Common myeloid progenitor, CD34-positive (primary cell): ENCODE measurements at regions of chr12 and their contacts with region 1.

Region 1: GRCh38 chr12:2583091-2583497 is 211.7 kb upstream of the FKBP4 start:
- DNase-seq: peak; percentile 56 to 73 (median 71)
- H3K4me3 ChIP-seq: peak overlapping the region in 4 of 7 experiments; percentile 23 to 54 (median 38)
- H3K27ac ChIP-seq: no peak overlapping the region
- H3K4me1 ChIP-seq: peaks cover 0 to 17% (median 10%) of the 10 kb centered on the region in 4 experiments
- H3K27me3 ChIP-seq: no peaks in the 10 kb centered on the region

Region 2: DNA sequence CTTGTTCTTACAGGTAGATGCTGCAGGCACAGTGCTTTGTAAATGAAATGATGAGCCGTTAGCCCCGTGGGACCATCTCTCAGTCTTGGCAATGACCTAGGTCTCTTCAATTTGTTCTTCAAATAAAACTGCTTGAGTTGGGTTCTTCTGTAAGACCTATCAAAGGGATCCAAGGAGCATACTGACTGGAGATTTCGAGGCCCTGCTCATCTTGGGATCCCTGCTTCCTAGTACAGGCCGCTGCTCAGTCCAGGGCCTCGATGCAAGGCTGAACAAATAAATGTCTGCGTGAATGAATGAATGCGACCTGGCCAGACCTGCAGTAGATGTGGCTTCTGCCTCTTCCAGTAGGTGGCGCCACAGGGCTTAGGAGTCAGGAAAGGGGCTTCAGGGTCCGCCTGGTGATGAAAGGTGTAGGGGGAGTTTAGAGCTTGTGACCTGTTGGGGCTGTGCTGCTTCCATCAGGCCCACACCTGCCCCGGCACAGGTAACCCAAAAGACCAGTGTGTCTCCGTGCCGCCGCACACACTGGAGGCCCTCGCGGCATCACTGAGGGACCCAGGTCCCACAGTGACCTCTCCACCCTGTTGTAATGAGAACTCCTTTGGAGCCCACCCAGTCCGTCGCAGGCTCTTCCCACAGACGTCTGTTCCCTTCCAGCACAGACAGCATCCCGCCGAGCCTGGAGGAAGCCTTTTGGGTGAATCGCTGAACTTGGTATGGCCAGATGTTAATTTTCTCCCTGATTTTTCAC is 525.9 kb before region 1 on chr12:
- CTCF ChIA-PET with region 1: interaction called, 33 read pairs
- POLR2A ChIA-PET with region 1: no interaction called
- DNase-seq: peak; percentile 81 to 90 (median 86)
- H3K4me3 ChIP-seq: no peak overlapping the region
- H3K27ac ChIP-seq: no peak overlapping the region
- H3K4me1 ChIP-seq: peaks cover 0 to 16% (median 14%) of the 10 kb centered on the region in 4 experiments
- H3K27me3 ChIP-seq: peaks cover 13 to 35% (median 23%) of the 10 kb centered on the region in 5 experiments

Region 3: DNA sequence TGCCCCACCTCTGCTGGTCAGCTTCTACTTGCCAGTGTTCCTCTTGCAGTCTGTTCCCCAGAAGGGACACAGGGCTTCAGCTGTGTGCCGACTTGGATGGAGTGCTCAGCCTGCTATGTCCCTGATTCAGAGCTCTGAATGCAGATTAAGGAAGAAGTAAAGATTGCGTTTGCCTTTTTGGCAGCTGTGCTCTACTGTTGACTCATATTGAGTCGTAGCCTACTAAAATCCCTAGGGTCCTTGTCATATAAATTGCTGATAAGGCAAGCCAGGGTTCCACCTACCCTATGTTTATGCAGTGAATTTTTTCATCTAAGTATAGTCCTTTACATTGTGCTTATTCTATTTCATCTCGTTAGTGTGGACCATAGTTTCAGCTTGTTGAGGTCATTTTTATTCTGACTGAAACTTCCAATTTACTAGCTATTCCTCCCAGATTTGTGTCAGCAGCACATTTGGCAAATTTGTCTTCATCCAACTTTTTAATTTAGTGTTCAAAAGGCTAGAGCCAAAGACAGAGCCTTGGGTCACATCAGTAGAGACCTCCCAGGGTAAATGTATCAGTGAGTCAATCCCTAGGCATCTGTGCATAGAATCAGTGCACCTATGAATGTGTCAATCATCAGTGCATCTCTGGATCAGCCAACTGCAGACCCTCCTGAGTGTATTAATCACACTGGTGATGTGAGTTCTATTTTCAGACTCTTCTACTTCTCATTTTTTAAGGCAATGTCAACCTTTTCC is 498.4 kb before region 1 on chr12:
- CTCF ChIA-PET with region 1: no interaction called
- POLR2A ChIA-PET with region 1: no interaction called
- DNase-seq: no peak
- H3K4me3 ChIP-seq: no peak overlapping the region
- H3K27ac ChIP-seq: no peak overlapping the region
- H3K4me1 ChIP-seq: no peaks in the 10 kb centered on the region
- H3K27me3 ChIP-seq: no peaks in the 10 kb centered on the region

Region 4: GRCh38 chr12:2360629-2361168 is 222.4 kb before region 1 on chr12:
- CTCF ChIA-PET with region 1: interaction called, 20 read pairs
- POLR2A ChIA-PET with region 1: interaction called, 3 read pairs
- DNase-seq: no peak
- H3K4me3 ChIP-seq: no peak overlapping the region
- H3K27ac ChIP-seq: no peak overlapping the region
- H3K4me1 ChIP-seq: peaks cover 22 to 98% (median 70%) of the 10 kb centered on the region in 4 experiments
- H3K27me3 ChIP-seq: no peaks in the 10 kb centered on the region

Region 5: DNA sequence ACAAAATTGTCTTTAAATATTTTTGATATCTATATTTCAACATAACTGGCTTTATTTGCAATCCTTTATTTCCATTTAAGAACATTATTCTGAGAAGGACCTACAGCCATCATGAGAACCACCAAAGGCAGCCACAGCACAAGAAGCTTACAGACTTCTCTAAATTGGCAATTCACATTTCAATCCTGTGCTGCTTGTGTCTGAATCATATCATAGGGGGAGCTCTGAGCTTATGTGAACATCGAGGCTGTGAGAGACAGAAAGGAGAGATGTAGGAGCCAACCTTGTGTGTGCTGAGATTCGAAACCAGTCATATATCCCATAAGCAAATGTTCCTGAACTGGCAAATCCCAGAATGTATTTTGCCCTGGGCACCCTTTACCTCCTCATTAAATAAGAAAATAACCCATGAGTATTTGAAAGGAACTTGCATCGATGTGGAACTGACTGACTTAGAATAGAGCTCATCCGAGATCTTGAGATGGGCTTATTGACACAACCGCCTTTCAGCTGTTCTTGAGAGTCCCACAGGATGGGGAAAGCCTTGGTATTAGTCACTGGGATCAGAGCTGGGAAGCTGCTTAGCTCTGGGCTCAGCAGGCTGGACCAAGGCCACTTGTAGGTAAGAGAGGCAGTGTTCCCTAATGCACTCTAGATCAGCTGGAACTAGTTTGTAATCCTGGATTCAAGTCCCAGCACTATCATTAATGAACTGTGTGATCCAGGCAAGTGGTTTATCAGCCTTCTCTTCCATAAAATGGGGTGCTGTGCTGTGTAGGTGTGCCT is 200.5 kb before region 1 on chr12:
- CTCF ChIA-PET with region 1: interaction called, 16 read pairs
- POLR2A ChIA-PET with region 1: no interaction called
- DNase-seq: peak in 2 of 3 donors; percentile 55 to 56
- H3K4me3 ChIP-seq: no peak overlapping the region
- H3K27ac ChIP-seq: no peak overlapping the region
- H3K4me1 ChIP-seq: peaks cover 0 to 20% (median 10%) of the 10 kb centered on the region in 4 experiments
- H3K27me3 ChIP-seq: no peaks in the 10 kb centered on the region

Region 6: GRCh38 chr12:2460051-2460670 is 122.9 kb before region 1 on chr12:
- CTCF ChIA-PET with region 1: no interaction called
- POLR2A ChIA-PET with region 1: no interaction called
- DNase-seq: no peak
- H3K4me3 ChIP-seq: no peak overlapping the region
- H3K27ac ChIP-seq: no peak overlapping the region
- H3K4me1 ChIP-seq: peaks cover 0 to 4% (median 2%) of the 10 kb centered on the region in 4 experiments
- H3K27me3 ChIP-seq: no peaks in the 10 kb centered on the region

Region 7: DNA sequence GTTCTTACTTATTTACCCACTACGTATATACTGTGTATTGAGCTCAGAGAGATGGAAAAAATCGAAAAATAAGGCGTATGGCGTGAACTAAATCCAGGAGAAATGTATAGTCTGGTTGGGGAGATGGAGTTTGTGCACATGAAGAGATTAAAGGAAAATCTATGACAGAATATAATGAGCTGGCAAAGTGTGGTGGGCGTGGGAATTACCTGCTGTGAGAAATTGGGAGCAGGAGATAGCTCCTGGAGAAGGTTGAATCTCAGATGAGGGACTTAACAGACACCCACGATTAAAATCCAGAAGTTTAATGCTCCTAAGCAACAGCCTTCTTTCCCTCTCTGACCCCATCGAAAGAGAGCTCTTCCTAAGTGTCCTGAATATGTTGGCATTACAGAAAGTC is 12.5 kb before region 1 on chr12:
- CTCF ChIA-PET with region 1: interaction called, 11 read pairs
- POLR2A ChIA-PET with region 1: no interaction called
- DNase-seq: no peak
- H3K4me3 ChIP-seq: no peak overlapping the region
- H3K27ac ChIP-seq: no peak overlapping the region
- H3K4me1 ChIP-seq: no peaks in the 10 kb centered on the region
- H3K27me3 ChIP-seq: no peaks in the 10 kb centered on the region

Region 8: DNA sequence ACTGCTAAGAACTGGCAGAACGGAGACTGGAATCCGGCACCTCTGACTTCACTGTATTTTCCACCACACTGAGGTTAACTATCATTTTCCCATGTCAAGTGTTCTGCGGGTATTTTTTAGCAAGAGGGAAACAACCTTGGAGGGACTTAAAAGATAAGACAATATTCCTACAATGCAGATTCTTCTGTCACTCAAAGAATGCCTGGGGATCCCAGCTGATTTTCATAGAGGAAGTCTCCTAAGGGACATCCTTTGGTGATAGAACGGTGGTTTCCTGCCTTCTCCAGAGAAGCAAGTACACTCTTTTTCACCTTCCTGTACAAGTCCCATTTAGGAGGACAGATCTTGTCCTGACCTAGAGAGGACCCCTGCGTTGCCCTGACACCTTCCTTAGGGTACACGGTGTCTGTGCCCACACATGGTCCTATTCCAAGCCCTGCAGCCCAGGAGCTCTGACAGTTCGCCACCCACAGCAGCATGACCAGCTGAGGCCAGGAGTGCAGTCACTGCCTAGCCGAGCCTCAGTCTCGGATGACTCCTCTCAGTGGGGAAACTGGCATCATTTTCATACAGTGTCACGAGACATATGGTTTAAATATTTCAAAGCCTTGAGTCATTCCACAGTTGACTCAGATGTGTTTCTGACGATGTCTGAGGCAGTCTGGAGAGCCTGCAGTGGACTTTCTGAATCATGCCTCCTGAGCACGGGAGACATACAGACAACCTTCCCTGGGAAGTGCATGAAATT is 30.4 kb after region 1 on chr12:
- CTCF ChIA-PET with region 1: interaction called, 22 read pairs
- POLR2A ChIA-PET with region 1: interaction called, 5 read pairs
- DNase-seq: peak in 2 of 3 donors; percentile 71 to 78
- H3K4me3 ChIP-seq: no peak overlapping the region
- H3K27ac ChIP-seq: no peak overlapping the region
- H3K4me1 ChIP-seq: peaks cover 2 to 62% (median 56%) of the 10 kb centered on the region in 4 experiments
- H3K27me3 ChIP-seq: no peaks in the 10 kb centered on the region

Region 9: DNA sequence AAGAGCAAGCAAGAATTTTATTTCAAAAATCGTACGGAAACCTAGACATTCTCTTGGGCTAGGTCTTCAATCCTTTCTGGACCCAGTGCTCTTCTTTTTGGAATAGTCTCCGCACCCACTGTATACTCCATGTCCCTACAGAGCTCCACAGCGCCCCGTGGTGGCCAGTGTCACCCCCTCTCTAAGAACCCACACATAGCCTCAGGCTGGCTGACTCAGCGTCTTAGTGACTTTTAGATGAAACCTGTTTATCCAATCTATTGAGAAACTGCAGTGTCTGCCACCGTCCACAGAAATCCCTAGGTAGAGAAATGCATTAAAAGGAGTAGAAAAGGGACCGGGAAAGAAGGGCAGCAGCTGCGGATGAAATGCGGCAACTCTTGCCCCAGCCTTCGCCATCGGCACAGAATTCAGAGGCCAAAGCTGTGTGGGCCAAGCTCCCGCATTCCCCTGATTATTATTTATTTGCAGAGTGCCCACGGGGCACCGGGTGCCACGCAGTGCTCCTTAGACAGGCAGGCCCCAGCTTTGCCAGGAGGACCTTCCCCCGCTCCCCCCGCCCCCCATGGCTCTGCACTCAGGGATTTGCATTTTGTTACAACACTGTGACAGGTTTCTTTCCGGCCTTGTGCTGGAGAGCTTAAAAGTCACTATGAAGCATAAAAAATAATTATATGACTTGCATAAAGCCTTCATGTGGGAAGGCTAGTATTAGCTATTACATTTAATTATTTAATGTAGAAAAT is 41.6 kb after region 1 on chr12:
- CTCF ChIA-PET with region 1: interaction called, 11 read pairs
- POLR2A ChIA-PET with region 1: no interaction called
- DNase-seq: peak; percentile 71 to 87 (median 86)
- H3K4me3 ChIP-seq: peak overlapping the region in 2 of 7 experiments; percentile 7 to 11
- H3K27ac ChIP-seq: peak overlapping the region in 1 of 2 experiments; percentile 46
- H3K4me1 ChIP-seq: peaks cover 5 to 84% (median 72%) of the 10 kb centered on the region in 4 experiments
- H3K27me3 ChIP-seq: no peaks in the 10 kb centered on the region